Ovary (tissue), 10 donors: ENCODE measurements at regions of chr12 and their contacts with region 1.

Region 1: DNA sequence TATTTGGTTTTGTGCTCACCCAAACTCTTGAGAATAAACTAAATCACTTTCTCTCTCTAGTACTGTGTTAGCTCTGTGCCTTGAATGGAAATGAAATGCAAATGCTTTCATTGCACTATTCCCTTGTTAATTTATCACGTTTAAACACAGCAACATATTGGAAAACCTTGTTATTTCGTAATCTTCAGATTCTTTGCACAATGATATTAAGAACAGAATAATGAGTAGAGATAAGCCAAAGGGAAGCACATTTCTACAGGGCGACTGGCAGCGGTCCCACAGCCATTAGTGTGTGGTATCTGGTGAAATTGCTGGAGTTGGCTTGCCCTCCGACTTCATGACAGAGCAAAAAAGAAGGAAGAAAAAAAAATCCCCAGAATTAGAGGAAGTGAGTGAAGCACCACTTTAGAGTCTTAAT is 166.1 kb upstream of the E2F7 start:
- DNase-seq: peak; percentile 82 to 93 (median 90)
- H3K4me3 ChIP-seq: no peak overlapping the region
- H3K27ac ChIP-seq: peak overlapping the region in 1 of 2 donors; percentile 73
- H3K4me1 ChIP-seq: peaks cover 10% of the 10 kb centered on the region
- H3K27me3 ChIP-seq: no peaks in the 10 kb centered on the region
- CTCF ChIP-seq: no peak
- EP300 ChIP-seq: no peak
- POLR2A ChIP-seq: no peak

Region 2: GRCh38 chr12:77058740-77059139 is 172.8 kb before region 1 on chr12:
- intact Hi-C with region 1: no loop called
- DNase-seq: no peak
- H3K4me3 ChIP-seq: no peak overlapping the region
- H3K27ac ChIP-seq: no peak overlapping the region
- H3K4me1 ChIP-seq: no peaks in the 10 kb centered on the region
- H3K27me3 ChIP-seq: no peaks in the 10 kb centered on the region
- CTCF ChIP-seq: no peak
- EP300 ChIP-seq: no peak
- POLR2A ChIP-seq: no peak

Region 3: DNA sequence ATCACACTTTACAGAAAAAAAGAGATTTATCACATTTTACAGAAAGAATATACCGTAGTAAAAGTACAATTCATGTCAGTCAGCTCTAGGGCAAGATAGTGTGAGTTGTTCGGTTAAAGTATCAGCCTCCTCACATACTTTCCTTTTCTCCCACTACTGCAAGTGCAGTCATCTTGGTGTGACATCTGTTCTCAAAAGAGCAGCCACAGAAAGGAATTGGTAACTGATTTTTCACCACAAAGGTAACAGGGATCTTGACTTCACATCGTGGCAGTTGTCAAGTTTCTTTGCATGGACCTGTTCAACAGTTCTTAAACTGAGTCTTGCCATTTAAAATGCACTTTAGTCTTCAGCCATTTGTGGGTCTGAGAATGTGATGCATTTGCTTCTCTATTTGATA is 161.1 kb before region 1 on chr12:
- intact Hi-C with region 1: no loop called
- DNase-seq: no peak
- H3K4me3 ChIP-seq: no peak overlapping the region
- H3K27ac ChIP-seq: no peak overlapping the region
- H3K4me1 ChIP-seq: no peaks in the 10 kb centered on the region
- H3K27me3 ChIP-seq: no peaks in the 10 kb centered on the region
- CTCF ChIP-seq: no peak
- EP300 ChIP-seq: no peak
- POLR2A ChIP-seq: no peak

Region 4: DNA sequence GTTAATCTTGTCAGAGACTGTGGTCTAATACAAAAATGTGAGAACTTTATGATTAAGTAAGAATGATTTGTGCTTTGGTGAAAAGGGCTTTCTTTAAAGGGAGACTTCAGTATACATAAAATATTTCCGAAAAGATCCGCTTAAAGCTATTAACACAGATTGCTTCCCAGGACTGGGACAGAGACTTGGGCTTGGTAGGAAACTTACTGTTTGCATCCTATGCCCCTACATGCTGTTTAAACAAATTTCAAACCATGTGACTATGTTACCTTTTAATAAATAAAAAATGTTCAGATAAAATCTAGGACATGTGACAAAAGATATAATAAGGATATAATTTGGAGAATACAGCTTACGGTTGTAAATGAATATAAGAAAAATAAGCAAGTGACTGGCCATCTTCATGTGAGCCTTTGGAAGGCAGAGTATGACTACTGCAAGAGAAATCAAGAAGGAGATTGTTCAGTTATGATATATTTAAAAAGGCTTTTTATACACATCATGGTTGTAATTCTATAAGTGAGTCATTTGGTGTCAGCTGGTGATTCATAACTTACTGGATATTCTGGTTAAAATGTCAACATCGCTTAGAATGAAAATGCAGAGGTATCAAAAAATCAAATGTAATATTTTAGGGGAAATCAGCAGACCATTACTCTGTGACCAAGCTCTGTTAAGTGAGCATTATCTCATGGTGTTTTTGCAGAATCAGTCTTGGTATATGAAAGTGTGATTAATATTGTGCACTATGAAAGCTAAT is 68.6 kb after region 1 on chr12:
- intact Hi-C with region 1: no loop called
- DNase-seq: no peak
- H3K4me3 ChIP-seq: no peak overlapping the region
- H3K27ac ChIP-seq: no peak overlapping the region
- H3K4me1 ChIP-seq: no peaks in the 10 kb centered on the region
- H3K27me3 ChIP-seq: no peaks in the 10 kb centered on the region
- CTCF ChIP-seq: no peak
- EP300 ChIP-seq: no peak
- POLR2A ChIP-seq: no peak

Region 5: GRCh38 chr12:77324763-77325468 is 93.4 kb after region 1 on chr12:
- intact Hi-C with region 1: loop called in 1 of 4 experiments (anchors 5 kb)
- DNase-seq: peak; percentile 80 to 86 (median 85)
- H3K4me3 ChIP-seq: peak overlapping the region; percentile 66
- H3K27ac ChIP-seq: peak overlapping the region; percentile 33 to 83
- H3K4me1 ChIP-seq: peaks cover 5% of the 10 kb centered on the region
- H3K27me3 ChIP-seq: no peaks in the 10 kb centered on the region
- CTCF ChIP-seq: peak; percentile 28 to 51 (median 50)
- EP300 ChIP-seq: no peak
- POLR2A ChIP-seq: no peak

Region 6: DNA sequence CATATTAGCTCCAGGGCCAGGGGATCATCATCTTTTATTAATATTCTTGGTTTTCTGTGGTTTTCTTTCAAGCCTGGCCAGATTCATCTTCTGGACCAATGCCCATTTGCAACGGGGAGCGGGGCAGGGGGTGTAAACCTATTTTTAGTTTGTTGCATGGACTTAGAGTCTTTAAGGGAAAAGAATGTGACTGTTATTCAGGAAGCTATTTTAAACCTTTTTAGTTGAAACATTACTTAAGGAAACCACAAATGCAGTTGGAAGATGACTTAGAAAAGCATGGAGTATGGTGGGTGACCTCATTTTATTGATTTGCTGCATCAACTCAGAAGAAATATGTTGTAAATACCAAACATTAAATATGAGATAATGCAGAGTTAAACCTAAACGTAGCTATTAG is 202.3 kb after region 1 on chr12:
- intact Hi-C with region 1: no loop called
- DNase-seq: no peak
- H3K4me3 ChIP-seq: no peak overlapping the region
- H3K27ac ChIP-seq: no peak overlapping the region
- H3K4me1 ChIP-seq: peaks cover 7% of the 10 kb centered on the region
- H3K27me3 ChIP-seq: no peaks in the 10 kb centered on the region
- CTCF ChIP-seq: no peak
- EP300 ChIP-seq: no peak
- POLR2A ChIP-seq: no peak